Endothelial cell of umbilical vein (primary cell): ENCODE measurements at regions of chr16 and their contacts with region 1.

Region 1: DNA sequence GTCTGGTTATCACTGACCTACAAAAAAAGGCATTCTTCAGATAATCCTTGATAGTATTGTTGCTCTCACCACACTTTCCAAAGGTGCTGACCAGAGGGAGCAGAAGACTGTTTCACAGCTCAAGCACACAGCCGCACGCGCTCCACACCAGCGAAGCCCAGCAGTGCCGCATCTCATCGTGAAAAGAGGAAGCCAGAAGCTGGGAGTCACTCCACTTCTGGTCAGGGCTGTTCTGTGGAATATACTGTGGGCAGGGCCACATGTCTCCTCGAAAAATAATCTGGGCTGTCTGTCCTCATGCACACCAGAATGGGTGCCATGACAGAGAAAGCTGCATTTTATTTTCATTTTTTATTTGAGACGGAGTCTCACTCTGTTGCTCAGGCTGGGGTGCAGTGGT is 7.3 kb upstream of the PRSS36 start:
- DNase-seq: no peak
- H3K4me3 ChIP-seq: no peak overlapping the region
- H3K27ac ChIP-seq: no peak overlapping the region
- H3K4me1 ChIP-seq: no peaks in the 10 kb centered on the region
- H3K27me3 ChIP-seq: no peaks in the 10 kb centered on the region
- CTCF ChIP-seq: no peak
- POLR2A ChIP-seq: no peak

Region 2: DNA sequence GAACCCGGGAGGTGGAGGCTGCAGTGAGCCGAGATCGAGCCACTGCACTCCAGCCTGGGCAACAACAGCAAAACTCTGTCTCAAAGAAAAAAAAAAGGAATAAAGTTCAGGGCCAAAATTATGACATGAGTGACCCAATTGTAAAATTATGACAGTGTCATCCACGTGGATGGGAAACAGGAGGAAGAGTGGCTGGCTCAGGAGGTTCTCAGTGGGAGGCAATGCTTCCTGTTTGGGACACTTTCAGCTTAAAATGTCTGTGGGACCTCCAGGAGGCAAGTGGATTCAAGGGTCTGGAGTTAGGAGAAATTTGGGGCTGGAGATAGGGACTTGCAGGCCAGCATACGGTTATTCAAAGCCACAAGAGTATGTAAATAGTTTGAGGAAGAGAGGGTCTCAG is 131.8 kb before region 1 on chr16:
- CTCF ChIA-PET with region 1: no interaction called
- POLR2A ChIA-PET with region 1: no interaction called
- dilution Hi-C with region 1: no loop called
- intact Hi-C with region 1: loop called (anchors 5 kb)
- DNase-seq: no peak
- H3K4me3 ChIP-seq: no peak overlapping the region
- H3K27ac ChIP-seq: no peak overlapping the region
- H3K4me1 ChIP-seq: no peaks in the 10 kb centered on the region
- H3K27me3 ChIP-seq: no peaks in the 10 kb centered on the region
- CTCF ChIP-seq: no peak
- POLR2A ChIP-seq: no peak

Region 3: GRCh38 chr16:31168848-31169247 is 11.7 kb after region 1 on chr16:
- CTCF ChIA-PET with region 1: interaction called, 10 read pairs
- POLR2A ChIA-PET with region 1: no interaction called
- dilution Hi-C with region 1: no loop called
- intact Hi-C with region 1: no loop called
- DNase-seq: no peak
- H3K4me3 ChIP-seq: no peak overlapping the region
- H3K27ac ChIP-seq: no peak overlapping the region
- H3K4me1 ChIP-seq: no peaks in the 10 kb centered on the region
- H3K27me3 ChIP-seq: no peaks in the 10 kb centered on the region
- CTCF ChIP-seq: no peak
- POLR2A ChIP-seq: no peak